Natural killer cell (primary cell): ENCODE measurements at regions of chr11 and their contacts with region 1.

Region 1: DNA sequence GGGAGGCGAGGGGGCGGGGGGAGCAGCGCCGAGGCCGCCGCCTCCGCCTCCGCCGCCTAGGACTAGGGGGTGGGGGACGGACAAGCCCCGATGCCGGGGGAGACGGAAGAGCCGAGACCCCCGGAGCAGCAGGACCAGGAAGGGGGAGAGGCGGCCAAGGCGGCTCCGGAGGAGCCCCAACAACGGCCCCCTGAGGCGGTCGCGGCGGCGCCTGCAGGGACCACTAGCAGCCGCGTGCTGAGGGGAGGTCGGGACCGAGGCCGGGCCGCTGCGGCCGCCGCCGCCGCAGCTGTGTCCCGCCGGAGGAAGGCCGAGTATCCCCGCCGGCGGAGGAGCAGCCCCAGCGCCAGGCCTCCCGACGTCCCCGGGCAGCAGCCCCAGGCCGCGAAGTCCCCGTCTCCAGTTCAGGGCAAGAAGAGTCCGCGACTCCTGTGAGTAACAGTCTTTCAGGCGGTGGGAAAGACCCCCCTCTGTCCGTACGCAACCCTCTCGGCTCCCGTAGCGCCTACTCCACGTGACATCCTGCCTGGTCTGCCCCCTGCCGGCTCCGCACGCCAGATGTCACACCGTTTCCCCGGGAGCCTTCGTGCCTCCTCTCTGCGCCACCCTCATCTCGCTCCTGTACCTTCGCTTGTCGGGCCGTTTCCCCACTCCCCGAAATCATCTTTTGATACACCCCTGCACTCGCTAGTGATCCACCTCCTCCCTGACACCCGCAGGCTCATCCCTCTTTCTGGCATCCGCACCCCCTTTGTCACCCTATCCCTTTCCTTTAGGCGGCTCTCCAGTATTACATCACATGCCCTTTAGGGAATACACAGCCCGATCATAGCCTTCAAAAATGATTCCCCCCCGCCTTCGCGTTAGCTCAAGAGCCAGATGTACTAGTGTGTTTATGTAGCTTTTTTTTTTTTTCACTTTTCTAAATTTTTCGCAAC is 598 bp downstream of the ZFP91 start:
- DNase-seq: peak; percentile 91 to 97
- ATAC-seq: peak; percentile 32 to 67 (median 47)
- H3K4me3 ChIP-seq: peak overlapping the region; percentile 90
- H3K4me3 Mint-ChIP-seq: peak overlapping the region; percentile 91
- H3K27ac ChIP-seq: peak overlapping the region; percentile 99
- H3K27ac Mint-ChIP-seq: peak overlapping the region; percentile 99 to 100
- H3K4me1 ChIP-seq: peaks cover 29% of the 10 kb centered on the region
- H3K4me1 Mint-ChIP-seq: peaks cover 77 to 81% of the 10 kb centered on the region in 2 donors
- H3K27me3 ChIP-seq: no peaks in the 10 kb centered on the region
- H3K27me3 Mint-ChIP-seq: peaks cover 0 to 3% of the 10 kb centered on the region in 2 donors
- CTCF ChIP-seq: peak; percentile 80

Region 2: DNA sequence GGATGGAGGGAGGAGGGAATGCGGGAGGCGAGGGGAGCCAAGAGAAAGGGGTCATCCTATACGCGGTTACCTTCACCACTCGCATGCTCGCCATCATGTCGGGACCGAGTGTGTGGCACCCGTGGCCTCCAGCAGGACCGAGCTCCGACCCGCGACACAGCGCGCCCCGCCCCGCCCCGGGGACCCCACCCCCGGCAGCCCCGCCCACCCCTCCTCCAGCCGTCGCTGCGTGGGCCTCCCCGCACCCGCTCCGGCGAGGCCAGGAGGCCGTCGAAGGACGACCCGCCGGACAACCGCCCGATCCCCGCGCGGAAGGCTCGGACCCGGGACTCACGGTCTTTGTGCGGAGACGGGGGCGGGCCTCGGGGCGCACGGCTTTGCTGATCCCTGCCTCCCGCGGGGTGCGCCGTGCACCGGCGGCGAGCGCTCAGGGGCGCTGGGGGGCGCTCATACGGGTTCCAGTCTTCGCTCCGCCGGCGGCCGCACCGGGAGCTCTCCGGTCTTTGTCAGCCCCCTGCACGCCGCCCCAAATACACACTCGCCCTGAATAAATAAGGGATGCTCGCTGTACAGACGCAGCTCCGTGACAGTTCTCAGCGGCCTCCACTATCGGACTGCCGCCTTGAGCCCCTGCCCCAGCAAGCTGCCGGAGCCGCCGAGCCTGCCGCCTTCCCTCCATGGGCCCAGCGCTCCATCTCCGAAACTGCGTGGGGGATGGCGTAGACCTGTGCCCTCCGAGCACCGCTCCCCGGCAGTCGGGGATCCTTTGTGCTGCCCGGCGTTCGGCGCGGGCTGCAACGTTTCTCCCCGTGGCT is 1011.7 kb before region 1 on chr11 and contains the start of gene UBE2L6:
- intact Hi-C with region 1: loop called (anchors 5 kb)
- DNase-seq: peak; percentile 56 to 95
- ATAC-seq: peak; percentile 76 to 91 (median 78)
- H3K4me3 ChIP-seq: peak within 1 kb of the TSS; percentile 99
- H3K4me3 Mint-ChIP-seq: peak within 1 kb of the TSS; percentile 99
- H3K27ac ChIP-seq: peak within 1 kb of the TSS; percentile 95
- H3K27ac Mint-ChIP-seq: peak within 1 kb of the TSS; percentile 96 to 99
- H3K4me1 ChIP-seq: peaks cover 24% of the 10 kb centered on the region
- H3K4me1 Mint-ChIP-seq: peaks cover 40 to 50% of the 10 kb centered on the region in 2 donors
- H3K27me3 ChIP-seq: no peaks in the 10 kb centered on the region
- H3K27me3 Mint-ChIP-seq: no peaks in the 10 kb centered on the region
- CTCF ChIP-seq: peak; percentile 93
- total RNA-seq, gene UBE2L6: 89.1 to 108 (median 103) TPM

Region 3: GRCh38 chr11:57712256-57713150 is 867.0 kb before region 1 on chr11 and contains the start of gene TMX2:
- intact Hi-C with region 1: loop called (anchors 2 kb)
- DNase-seq: peak; percentile 86 to 96
- ATAC-seq: peak; percentile 88 to 96 (median 89)
- H3K4me3 ChIP-seq: peak within 1 kb of the TSS; percentile 72
- H3K4me3 Mint-ChIP-seq: peak within 1 kb of the TSS; percentile 96
- H3K27ac ChIP-seq: peak within 1 kb of the TSS; percentile 73
- H3K27ac Mint-ChIP-seq: peak within 1 kb of the TSS; percentile 93 to 94
- H3K4me1 ChIP-seq: peaks cover 19% of the 10 kb centered on the region
- H3K4me1 Mint-ChIP-seq: peaks cover 36 to 41% of the 10 kb centered on the region in 2 donors
- H3K27me3 ChIP-seq: no peaks in the 10 kb centered on the region
- H3K27me3 Mint-ChIP-seq: no peaks in the 10 kb centered on the region
- CTCF ChIP-seq: no peak
- total RNA-seq, gene TMX2: 43.6 to 70.4 (median 45.7) TPM

Region 4: DNA sequence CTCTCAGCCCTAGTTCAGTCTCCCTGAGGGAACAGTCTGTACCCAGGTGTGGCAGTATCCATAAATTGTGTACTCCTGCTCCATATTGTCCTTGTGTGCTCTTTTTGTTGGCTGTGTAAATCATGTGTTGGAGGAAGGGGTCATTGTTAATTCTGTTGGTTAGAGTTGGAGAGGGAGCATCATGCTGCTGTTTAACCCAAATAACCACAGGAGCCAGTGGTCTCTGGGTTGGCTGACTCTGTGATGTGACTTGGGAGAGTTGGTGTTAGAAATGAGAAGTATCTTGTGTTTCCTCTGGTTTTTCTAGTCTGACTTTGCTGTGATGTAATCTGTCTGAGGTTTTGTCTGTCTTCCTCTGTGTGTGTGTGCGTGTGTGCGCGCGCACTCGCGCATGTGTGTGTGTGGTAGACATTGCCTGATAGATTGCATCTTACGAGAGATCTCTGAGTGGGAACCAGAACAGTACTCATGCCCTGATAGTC is 787.4 kb before region 1 on chr11:
- intact Hi-C with region 1: loop called (anchors 10 kb)
- DNase-seq: peak; percentile 75 to 95
- ATAC-seq: peak; percentile 92 to 97 (median 93)
- H3K4me3 ChIP-seq: no peak overlapping the region
- H3K4me3 Mint-ChIP-seq: peak overlapping the region; percentile 48
- H3K27ac ChIP-seq: peak overlapping the region; percentile 57
- H3K27ac Mint-ChIP-seq: peak overlapping the region; percentile 86
- H3K4me1 ChIP-seq: peaks cover 30% of the 10 kb centered on the region
- H3K4me1 Mint-ChIP-seq: peaks cover 24 to 31% of the 10 kb centered on the region in 2 donors
- H3K27me3 ChIP-seq: no peaks in the 10 kb centered on the region
- H3K27me3 Mint-ChIP-seq: no peaks in the 10 kb centered on the region
- CTCF ChIP-seq: no peak

Region 5: DNA sequence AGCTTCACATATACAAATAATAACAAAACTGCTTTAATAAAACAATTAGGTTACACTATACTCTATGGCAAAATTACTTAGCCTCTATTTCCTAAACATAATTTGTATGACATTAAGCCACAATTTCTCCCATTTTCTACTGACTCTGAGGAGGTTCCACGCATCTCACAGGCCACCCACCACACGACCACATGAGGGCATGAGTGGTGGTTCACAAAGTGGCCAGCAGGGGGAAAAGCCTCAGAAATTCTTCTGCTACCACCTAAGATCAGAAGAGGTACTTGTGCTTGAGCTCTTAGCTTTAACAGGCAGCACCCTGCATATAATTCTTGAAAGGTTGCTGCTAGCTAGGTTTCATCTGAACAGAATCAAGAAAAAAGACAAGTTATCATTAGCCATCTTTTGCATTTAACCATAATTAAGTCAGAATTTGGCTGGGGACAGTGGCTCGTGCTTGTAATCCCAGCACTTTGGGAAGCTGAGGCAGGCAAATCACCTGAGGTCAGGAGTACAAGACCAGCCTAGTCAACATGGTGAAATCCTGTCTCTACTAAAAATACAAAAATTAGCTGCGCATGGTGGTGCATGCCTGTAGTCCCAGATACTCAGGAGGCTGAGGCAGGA is 11.5 kb before region 1 on chr11:
- intact Hi-C with region 1: loop called (anchors 1 kb)
- DNase-seq: peak; percentile 71 to 90
- ATAC-seq: peak; percentile 92 to 100 (median 99)
- H3K4me3 ChIP-seq: no peak overlapping the region
- H3K4me3 Mint-ChIP-seq: peak overlapping the region; percentile 10
- H3K27ac ChIP-seq: no peak overlapping the region
- H3K27ac Mint-ChIP-seq: peak overlapping the region; percentile 64 to 84
- H3K4me1 ChIP-seq: peaks cover 12% of the 10 kb centered on the region
- H3K4me1 Mint-ChIP-seq: peaks cover 49 to 53% of the 10 kb centered on the region in 2 donors
- H3K27me3 ChIP-seq: no peaks in the 10 kb centered on the region
- H3K27me3 Mint-ChIP-seq: no peaks in the 10 kb centered on the region
- CTCF ChIP-seq: peak; percentile 86